ENCODE measurements at regions of chr20 and their contacts with region 1.

Region 1: GRCh38 chr20:35303735-35304491 is 11.7 kb upstream of the FAM83C start:
- DNase-seq: peak; percentile 76 to 80
- ATAC-seq: peak; percentile 28 to 71 (median 48)
- H3K4me3 ChIP-seq: no peak overlapping the region
- H3K27ac ChIP-seq: peak overlapping the region; percentile 87
- H3K4me1 ChIP-seq: peaks cover 44% of the 10 kb centered on the region
- H3K27me3 ChIP-seq: no peaks in the 10 kb centered on the region
- CTCF ChIP-seq: peak; percentile 90

Region 2: GRCh38 chr20:35344354-35344837 is 40.5 kb after region 1 on chr20:
- intact Hi-C with region 1: loop called in 1 of 2 experiments (anchors 5 kb)
- DNase-seq: peak; percentile 63 to 76
- ATAC-seq: peak; percentile 82 to 89 (median 85)
- H3K4me3 ChIP-seq: peak overlapping the region; percentile 44
- H3K27ac ChIP-seq: peak overlapping the region; percentile 69
- H3K4me1 ChIP-seq: peaks cover 29% of the 10 kb centered on the region
- H3K27me3 ChIP-seq: no peaks in the 10 kb centered on the region
- CTCF ChIP-seq: no peak

Region 3: GRCh38 chr20:35434067-35435005 is 130.4 kb after region 1 on chr20:
- intact Hi-C with region 1: loop called in 1 of 2 experiments (anchors 5 kb)
- DNase-seq: peak; percentile 62 to 74
- ATAC-seq: peak in 2 of 4 donors; percentile 37 to 46
- H3K4me3 ChIP-seq: no peak overlapping the region
- H3K27ac ChIP-seq: no peak overlapping the region
- H3K4me1 ChIP-seq: no peaks in the 10 kb centered on the region
- H3K27me3 ChIP-seq: peaks cover 0 to 1% (median 0%) of the 10 kb centered on the region in 3 donors
- CTCF ChIP-seq: no peak

Region 4: GRCh38 chr20:35448788-35449373 is 145.0 kb after region 1 on chr20:
- intact Hi-C with region 1: loop called in 1 of 2 experiments (anchors 2 kb)
- DNase-seq: no peak
- ATAC-seq: no peak
- H3K4me3 ChIP-seq: no peak overlapping the region
- H3K27ac ChIP-seq: no peak overlapping the region
- H3K4me1 ChIP-seq: peaks cover 3% of the 10 kb centered on the region
- H3K27me3 ChIP-seq: no peaks in the 10 kb centered on the region
- CTCF ChIP-seq: no peak